ENCODE measurements at regions of chr14 and their contacts with region 1.

Region 1: GRCh38 chr14:51239813-51240803 is at the start of gene TMX1:
- DNase-seq: peak; percentile 99
- H3K4me3 Mint-ChIP-seq: no peak within 1 kb of the TSS
- H3K27ac Mint-ChIP-seq: no peak within 1 kb of the TSS
- H3K4me1 Mint-ChIP-seq: peaks cover 20% of the 10 kb centered on the region
- H3K27me3 Mint-ChIP-seq: no peaks in the 10 kb centered on the region
- CTCF ChIP-seq: no peak
- total RNA-seq, gene TMX1: 31.9 and 35.0 TPM in 2 replicates

Region 2: GRCh38 chr14:50943943-50944646 is 296.0 kb before region 1 on chr14 and contains the start of gene PYGL:
- CTCF ChIA-PET with region 1: no interaction called
- POLR2A ChIA-PET with region 1: interaction called, 16 read pairs
- intact Hi-C with region 1: no loop called
- DNase-seq: peak; percentile 72
- H3K4me3 Mint-ChIP-seq: peak within 1 kb of the TSS; percentile 86
- H3K27ac Mint-ChIP-seq: peak within 1 kb of the TSS; percentile 84
- H3K4me1 Mint-ChIP-seq: peaks cover 33% of the 10 kb centered on the region
- H3K27me3 Mint-ChIP-seq: no peaks in the 10 kb centered on the region
- CTCF ChIP-seq: no peak
- total RNA-seq, gene PYGL: 75.4 and 87.3 TPM in 2 replicates

Region 3: GRCh38 chr14:51202914-51203665 is 37.0 kb before region 1 on chr14:
- CTCF ChIA-PET with region 1: no interaction called
- POLR2A ChIA-PET with region 1: no interaction called
- intact Hi-C with region 1: no loop called
- DNase-seq: no peak
- H3K4me3 Mint-ChIP-seq: no peak overlapping the region
- H3K27ac Mint-ChIP-seq: no peak overlapping the region
- H3K4me1 Mint-ChIP-seq: no peaks in the 10 kb centered on the region
- H3K27me3 Mint-ChIP-seq: peaks cover 54% of the 10 kb centered on the region
- CTCF ChIP-seq: no peak

Region 4: GRCh38 chr14:51228890-51229289 is 11.2 kb before region 1 on chr14:
- CTCF ChIA-PET with region 1: no interaction called
- POLR2A ChIA-PET with region 1: interaction called, 24 read pairs
- intact Hi-C with region 1: no loop called
- DNase-seq: no peak
- H3K4me3 Mint-ChIP-seq: no peak overlapping the region
- H3K27ac Mint-ChIP-seq: no peak overlapping the region
- H3K4me1 Mint-ChIP-seq: no peaks in the 10 kb centered on the region
- H3K27me3 Mint-ChIP-seq: no peaks in the 10 kb centered on the region
- CTCF ChIP-seq: no peak